ENCODE measurements at regions of chr6 and their contacts with region 1.

Region 1: DNA sequence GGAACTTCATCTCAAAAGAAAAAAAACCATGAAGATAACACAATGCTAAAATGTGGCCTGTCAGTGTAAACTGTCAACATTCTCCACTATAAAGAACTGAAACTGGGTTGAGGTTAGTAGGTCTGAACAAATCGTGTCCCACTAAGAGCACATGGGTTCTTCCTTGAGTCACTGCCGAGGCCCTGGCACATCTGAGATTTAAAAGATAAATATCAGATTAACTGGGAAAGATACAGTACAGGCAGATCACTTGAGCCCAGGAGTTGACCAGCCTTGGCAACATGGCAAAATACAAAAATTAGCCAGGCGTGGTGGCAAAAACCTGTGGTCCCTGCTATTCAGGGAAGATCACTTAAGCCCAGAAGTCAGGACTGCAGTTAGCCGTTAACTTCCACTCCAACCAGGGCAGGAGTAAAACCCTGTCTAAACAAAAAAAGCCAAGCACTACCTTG is 5.6 kb downstream of the EEF1A1 start:
- DNase-seq: no peak
- H3K4me3 ChIP-seq: no peak overlapping the region
- H3K27me3 ChIP-seq: no peaks in the 10 kb centered on the region
- CTCF ChIP-seq: no peak

Region 2: GRCh38 chr6:73290435-73290834 is 224.8 kb before region 1 on chr6:
- CTCF ChIA-PET with region 1: no interaction called
- POLR2A ChIA-PET with region 1: no interaction called
- DNase-seq: no peak
- H3K4me3 ChIP-seq: no peak overlapping the region
- H3K27me3 ChIP-seq: no peaks in the 10 kb centered on the region
- CTCF ChIP-seq: no peak

Region 3: GRCh38 chr6:73451223-73452107 is 63.8 kb before region 1 on chr6:
- CTCF ChIA-PET with region 1: no interaction called
- POLR2A ChIA-PET with region 1: no interaction called
- DNase-seq: no peak
- H3K4me3 ChIP-seq: peak overlapping the region; percentile 64
- H3K27me3 ChIP-seq: no peaks in the 10 kb centered on the region
- CTCF ChIP-seq: no peak

Region 4: DNA sequence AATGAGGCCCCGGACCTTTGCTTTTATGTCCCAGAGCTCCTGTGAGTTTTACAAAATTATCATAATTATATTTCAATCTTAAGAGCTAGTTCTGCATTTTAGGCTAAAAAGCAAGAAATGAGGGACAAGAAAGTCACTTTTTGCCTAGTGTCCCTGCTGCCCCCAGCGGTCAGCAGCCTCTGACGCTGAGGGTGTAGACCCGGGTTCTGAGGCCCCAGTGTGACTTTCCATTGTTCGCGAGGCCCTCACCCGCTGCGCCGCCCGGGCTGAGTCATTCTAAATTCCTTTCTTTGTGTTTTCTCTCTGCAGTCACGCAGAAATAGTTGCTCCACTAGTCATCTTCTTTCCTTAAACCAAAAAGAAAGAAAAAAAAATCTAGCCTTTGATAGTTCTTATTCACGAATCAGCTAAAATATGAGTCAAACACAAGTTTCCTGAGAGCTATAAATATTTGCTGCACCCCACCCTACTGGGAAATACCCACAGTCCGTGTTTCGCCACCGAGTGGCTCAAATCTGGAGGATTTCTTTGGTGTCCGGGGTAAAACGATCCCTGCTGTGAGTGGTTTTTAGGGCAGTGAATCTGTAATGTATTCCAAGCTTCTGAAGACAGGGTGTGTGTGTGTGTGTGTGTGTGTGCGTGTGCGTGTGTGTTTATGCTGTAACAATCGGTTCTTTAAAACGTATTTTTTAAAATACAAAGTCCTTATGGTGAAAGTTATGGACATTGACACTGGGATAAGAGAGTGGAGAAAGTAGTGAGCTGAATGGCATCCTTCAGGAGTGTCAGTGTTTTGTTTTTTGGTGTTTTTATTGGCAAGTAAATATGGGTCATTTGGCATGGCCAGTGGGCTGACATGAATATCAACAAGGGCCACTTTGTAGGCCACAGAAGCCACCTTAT is 65.3 kb after region 1 on chr6:
- CTCF ChIA-PET with region 1: interaction called, 22 read pairs
- POLR2A ChIA-PET with region 1: interaction called, 34 read pairs
- DNase-seq: peak; percentile 99
- H3K4me3 ChIP-seq: peak overlapping the region; percentile 23
- H3K27me3 ChIP-seq: no peaks in the 10 kb centered on the region
- CTCF ChIP-seq: peak; percentile 61

Region 5: DNA sequence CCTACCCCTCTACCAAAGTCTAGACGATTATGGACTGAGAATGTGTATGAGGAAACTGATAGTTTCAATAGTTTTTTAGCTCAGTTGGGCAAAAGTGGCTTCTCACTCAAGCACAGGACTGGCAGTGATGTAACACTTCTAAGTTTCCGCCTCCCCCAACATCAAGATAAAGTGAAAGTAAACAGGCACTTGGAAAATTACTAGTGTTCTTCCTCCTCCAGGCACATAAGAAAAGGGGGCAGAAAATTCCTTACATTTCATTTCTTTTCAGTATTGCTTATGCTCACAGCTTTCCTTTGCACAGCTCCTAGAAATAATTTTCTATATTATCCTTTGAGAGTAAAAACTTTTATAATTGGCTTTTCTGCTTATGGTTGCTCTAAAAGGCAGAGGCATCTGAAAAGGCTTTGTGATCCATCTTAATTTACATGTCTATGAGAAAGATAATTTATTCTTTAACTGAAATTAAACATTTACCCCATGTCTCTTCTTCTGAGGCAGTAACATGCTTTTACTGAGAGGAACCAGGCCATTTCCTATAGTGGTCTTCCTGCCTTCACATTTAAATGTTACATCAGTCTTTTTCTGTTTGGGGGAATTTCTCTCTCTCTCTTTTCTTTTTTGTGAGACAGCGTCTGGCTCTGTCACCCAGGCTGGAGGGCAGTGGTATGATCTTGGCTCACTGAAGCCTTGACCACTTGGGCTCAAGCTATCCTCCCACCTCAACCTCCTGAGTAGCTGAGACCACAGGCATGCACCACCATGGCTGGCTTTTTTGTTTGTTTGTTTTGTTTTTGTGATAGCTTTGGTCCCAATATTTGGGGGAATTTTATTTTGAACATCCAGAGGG is 70.6 kb after region 1 on chr6:
- CTCF ChIA-PET with region 1: interaction called, 22 read pairs
- POLR2A ChIA-PET with region 1: interaction called, 34 read pairs
- DNase-seq: peak; percentile 47
- H3K4me3 ChIP-seq: peak overlapping the region; percentile 26
- H3K27me3 ChIP-seq: no peaks in the 10 kb centered on the region
- CTCF ChIP-seq: no peak

Region 6: GRCh38 chr6:73610444-73611275 is 95.4 kb after region 1 on chr6:
- CTCF ChIA-PET with region 1: interaction called, 56 read pairs
- POLR2A ChIA-PET with region 1: interaction called, 6 read pairs
- DNase-seq: peak; percentile 31
- H3K4me3 ChIP-seq: no peak overlapping the region
- H3K27me3 ChIP-seq: no peaks in the 10 kb centered on the region
- CTCF ChIP-seq: peak; percentile 57